ENCODE measurements at regions of chr16 and their contacts with region 1.

Region 1: DNA sequence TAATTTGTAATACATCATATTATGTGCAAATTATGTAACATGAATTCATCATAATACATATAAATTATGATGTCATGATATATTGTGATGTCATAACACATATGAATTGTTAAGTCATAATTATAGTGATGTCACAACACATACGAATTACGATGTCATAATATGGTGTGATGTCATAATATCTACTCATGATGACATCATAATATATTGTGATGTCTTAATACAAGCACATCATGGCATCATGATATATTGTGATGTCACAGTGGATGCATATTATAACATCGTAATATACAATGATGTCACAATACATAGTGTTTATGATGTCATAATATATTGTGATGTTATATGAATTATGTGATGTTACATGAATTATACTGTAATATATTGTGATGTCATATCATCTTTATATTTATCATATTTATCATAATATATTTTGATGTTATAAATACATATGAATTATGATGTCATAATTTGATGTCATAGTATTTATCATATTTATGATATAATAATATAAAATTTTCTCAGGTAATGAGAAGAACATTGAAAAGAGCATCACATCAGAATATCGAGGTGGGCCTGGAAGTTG is 1793.0 kb downstream of the TP53TG3F start:
- DNase-seq: peak; percentile 9

Region 2: DNA sequence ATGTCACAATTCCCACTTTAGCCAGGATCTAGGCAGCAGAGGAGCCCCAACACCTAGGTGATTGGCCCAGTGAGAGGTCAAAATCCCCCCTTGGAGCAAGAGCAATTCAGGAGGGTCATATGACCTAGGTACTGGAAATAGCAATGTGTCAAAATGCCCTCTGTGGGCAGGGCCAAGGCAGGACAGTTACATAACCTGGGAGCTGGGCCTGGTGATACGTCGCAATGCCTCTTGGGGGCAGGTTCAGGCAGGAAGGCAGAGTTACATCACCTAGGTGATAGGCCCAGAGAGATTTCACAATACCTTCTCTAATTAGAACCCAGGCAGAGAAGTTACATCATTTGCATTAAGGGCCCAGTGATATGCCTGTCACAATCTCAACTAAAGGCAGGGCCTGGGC is 113.2 kb after region 1 on chr16:
- in situ Hi-C with region 1: loop called (anchors 25 kb)
- DNase-seq: no peak